Right cardiac atrium (tissue), 5 donors: ENCODE measurements at regions of chr17 and their contacts with region 1.

Region 1: DNA sequence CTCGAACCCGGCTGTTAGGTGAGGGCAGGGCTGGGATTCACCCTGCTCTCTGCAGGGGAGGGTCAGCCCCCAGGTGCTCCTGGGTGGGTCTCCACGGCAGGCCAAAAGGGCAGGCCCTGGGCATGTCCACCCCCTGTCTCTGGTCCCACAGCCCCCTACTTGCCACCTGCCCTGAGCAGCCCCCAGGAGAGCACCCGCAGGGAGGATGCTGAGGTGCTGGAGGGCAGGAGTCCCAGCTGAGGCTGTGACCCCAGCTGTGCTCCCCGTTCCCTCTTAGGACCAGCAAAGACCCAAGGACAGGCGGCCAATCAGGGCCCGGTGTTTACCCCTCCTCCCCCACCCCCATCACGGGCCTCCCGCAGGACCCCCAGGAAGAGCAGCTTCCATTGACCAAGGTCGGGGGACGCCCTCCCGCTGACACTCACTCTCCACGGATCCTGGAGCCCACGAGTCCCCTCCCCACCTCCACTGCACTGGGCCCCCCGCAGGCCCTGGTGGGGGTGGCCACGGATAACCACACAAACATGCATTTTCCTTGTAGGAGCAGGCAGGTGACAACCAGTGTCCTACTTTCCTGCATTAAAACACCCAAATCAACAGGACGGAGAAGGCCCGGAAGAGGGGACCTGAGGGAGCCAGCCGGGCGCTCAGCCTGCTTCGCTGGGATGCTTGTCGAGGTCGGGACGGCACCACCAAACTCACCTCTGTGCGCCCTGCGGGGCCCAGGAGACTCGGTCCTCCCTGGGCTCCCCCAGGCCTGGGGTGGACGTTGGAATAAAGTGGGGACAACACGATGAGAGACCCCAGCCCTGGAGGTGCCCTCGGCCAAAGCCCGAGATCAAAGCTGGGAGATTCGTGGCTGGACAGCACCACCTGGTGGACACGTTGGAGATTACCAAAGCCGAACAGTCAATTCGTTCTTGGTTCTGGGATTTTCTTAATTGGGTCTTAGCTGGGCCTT is 22.5 kb upstream of the ENPP7 start:
- DNase-seq: peak in 2 of 3 donors; percentile 64 to 79
- ATAC-seq: peak; percentile 37 to 54
- H3K4me3 ChIP-seq: no peak overlapping the region
- H3K27ac ChIP-seq: no peak overlapping the region
- H3K4me1 ChIP-seq: no peaks in the 10 kb centered on the region
- H3K27me3 ChIP-seq: no peaks in the 10 kb centered on the region

Region 2: DNA sequence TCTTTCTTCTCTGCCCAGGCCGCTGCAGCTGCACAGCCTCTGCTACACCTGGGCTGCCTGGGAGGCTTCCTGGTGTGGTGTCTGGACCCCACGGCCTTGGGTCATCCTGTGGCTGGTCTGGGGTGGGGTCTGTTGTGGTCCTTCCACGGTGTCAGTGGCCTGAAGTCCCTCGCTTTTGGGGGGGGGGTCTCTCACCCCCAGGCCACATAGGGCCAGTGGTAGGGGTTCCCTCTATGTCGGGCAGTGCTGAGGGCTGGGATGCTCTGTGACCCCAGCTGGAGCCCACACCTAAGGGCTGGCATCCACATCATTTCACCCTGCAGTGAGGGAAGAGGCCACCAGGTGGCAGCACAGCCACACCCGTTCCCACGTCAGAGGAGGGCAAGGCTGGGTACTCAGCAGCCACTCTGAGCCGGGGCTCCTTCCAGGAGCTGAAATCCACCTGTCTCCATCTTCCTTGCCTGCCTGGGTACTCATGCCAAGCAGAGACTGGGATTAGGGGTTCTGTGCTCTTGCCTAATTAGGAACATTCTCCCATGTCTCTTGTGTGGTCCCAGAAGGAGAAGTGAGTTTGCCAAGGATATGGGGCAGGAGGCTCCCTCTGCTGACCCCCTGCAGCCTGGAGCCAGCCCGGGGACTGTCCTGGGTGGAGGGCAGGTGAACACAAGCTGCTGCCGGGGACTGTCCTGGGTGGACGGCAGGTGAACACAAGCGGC is 620.6 kb before region 1 on chr17:
- intact Hi-C with region 1: loop called in 1 of 4 experiments (anchors 10 kb)
- DNase-seq: peak; percentile 61 to 89 (median 86)
- ATAC-seq: peak; percentile 54 to 58
- H3K4me3 ChIP-seq: no peak overlapping the region
- H3K27ac ChIP-seq: no peak overlapping the region
- H3K4me1 ChIP-seq: peaks cover 3% of the 10 kb centered on the region
- H3K27me3 ChIP-seq: no peaks in the 10 kb centered on the region

Region 3: GRCh38 chr17:79400989-79401703 is 307.1 kb before region 1 on chr17:
- intact Hi-C with region 1: loop called in 3 of 4 experiments (anchors 5 to 10 kb)
- DNase-seq: peak; percentile 55 to 83 (median 81)
- ATAC-seq: peak; percentile 74 to 81
- H3K4me3 ChIP-seq: peak overlapping the region; percentile 42
- H3K27ac ChIP-seq: no peak overlapping the region
- H3K4me1 ChIP-seq: no peaks in the 10 kb centered on the region
- H3K27me3 ChIP-seq: no peaks in the 10 kb centered on the region

Region 4: DNA sequence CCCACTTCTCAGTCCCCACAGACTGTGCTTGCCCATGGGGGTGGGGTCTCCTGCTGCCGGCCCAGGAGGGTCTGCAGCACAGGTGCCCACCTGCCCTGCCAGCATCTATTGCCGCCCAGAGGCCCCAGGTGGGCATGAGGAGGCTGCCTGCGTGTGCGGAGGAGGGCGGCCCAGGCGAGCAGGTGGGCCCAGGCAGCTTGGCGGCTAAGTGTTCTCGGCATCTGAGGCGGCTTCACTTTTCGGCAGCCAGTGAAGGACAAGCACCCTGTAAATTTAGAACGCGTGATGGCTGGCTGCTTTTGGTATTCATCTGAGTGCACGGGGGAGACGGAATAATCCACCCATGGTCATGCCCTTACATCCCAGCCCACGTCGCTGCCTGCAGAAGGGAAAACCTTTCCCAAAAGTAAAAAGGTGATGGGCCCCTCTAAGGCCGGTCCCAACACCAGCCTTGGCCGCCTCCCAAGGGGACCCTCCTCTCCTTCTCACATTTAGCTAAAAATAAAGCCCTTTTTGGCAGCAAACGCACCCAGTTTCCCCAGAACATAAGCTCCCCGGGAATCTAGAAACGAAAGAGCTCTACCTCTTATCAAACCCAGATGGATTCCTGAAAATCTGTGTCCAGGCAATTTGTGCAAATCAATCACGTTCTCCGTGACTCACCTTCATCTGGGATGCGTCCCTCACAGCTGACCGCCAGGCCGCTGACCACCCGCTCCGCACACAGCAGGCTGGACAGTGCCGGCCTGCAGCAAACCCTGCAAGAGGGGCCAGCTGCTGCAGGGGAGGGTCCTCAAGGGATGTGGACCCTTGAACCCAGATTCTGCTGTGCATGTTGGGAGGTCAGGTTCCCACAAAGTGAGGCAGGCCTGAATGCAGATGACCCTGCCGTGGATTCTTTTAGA is 176.8 kb before region 1 on chr17:
- intact Hi-C with region 1: no loop called
- DNase-seq: no peak
- ATAC-seq: no peak
- H3K4me3 ChIP-seq: no peak overlapping the region
- H3K27ac ChIP-seq: no peak overlapping the region
- H3K4me1 ChIP-seq: no peaks in the 10 kb centered on the region
- H3K27me3 ChIP-seq: peaks cover 4% of the 10 kb centered on the region

Region 5: DNA sequence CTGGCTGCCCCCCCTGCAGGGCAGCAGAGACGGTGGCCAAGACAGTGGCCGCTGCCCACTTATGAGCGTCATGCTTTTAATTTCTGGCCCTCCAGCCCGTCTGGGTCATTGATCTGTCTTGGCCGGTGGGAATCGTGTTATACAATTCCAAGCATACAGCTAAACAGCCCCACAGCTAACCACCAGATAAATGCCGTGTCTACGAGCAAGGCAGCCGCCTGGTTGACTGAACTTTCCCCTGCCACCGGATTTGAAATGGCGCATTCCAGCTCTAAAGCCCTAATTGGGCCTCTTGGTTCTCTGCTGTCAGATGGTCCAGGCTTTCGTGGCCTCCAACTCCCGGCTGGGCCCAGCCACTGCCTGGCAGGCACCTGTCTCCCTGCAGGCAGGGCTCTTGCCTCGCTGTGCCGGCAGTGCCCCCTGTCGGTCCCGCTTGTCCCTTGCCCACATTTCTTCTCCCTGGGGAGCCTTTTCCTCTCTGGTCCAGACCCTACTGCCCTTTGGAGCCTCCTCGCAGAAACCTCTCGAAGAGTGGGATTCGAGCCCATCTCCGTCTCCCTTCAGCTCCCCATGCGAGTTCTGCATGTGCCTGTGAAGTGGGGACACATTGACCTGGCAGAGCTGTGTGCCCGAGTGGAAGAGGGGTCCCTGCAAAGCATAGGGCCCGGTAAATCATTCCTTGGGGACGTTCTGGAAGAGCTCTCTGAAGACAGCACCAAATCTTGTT is 95.6 kb before region 1 on chr17:
- intact Hi-C with region 1: no loop called
- DNase-seq: peak in 1 of 3 donors; percentile 60
- ATAC-seq: no peak
- H3K4me3 ChIP-seq: no peak overlapping the region
- H3K27ac ChIP-seq: no peak overlapping the region
- H3K4me1 ChIP-seq: no peaks in the 10 kb centered on the region
- H3K27me3 ChIP-seq: no peaks in the 10 kb centered on the region

Region 6: DNA sequence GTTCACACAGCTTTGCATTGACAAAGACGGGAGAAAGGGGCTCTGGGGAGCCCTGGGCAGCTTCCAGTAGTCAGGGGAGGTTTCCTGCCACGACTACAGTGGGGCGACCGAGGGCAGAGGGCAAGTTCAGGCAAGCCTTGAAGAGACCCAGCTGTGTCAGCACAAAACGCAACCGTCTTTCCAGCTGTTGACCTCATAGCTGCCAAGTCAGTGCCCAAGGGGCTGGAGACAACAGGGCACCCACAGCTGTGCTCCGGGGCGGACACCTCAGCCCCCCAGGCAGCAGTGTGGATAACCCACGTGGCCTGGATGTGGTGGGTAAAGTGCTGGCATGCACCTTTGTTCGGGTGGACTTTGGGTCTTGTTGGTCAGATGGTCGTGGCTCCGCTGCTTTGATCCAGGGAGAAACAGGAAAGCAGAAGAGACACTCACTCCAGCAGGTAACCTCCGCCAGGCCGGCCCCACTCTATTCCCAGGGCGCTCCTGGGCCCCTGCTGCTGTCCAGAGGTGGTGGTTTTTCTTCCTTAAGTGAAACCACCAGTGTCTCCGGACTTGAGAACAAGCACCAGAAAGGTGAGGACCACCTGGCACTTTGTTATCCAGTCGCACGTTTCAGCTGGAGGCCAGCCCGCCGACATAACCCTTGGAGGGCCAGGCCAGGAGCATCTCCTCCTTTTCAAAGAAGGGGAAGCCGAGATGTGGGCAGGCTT is 52.1 kb after region 1 on chr17:
- intact Hi-C with region 1: no loop called
- DNase-seq: no peak
- ATAC-seq: no peak
- H3K4me3 ChIP-seq: no peak overlapping the region
- H3K27ac ChIP-seq: no peak overlapping the region
- H3K4me1 ChIP-seq: no peaks in the 10 kb centered on the region
- H3K27me3 ChIP-seq: no peaks in the 10 kb centered on the region